Activated T-helper 1 cell treated with anti-CD3 and anti-CD28 coated beads, Interleukin-12 subunit alpha, Interleukin-12 subunit beta, Interleukin-2, Interleukin-4 antibody, amounts not matched to agents 30 ng/mL and 10 ng/mL and 1 ng/mL, durations not matched to agents 14 hours and 24 hours and 36 hours (primary cell): ENCODE measurements at regions of chr3 and their contacts with region 1.

Region 1: DNA sequence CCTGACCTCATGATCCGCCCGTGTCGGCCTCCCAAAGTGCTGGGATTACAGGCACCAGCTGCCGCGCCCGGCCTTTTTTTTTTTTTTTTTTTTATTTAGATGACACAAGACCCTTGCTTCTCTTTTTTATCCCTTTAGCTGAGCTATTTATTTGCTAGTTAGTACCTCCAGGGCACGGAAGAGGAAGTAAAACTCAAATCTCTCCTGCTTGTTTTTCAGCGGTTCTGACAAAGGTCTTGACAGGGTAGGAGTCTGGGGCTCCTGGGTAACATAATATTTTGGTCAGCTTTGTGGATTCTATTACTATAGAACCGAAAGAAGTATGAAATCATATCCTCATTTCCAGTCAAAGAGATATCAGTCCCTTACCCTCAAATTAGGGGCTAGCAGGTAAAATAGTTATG is 44.0 kb upstream of the ETV5 start:
- DNase-seq: no peak
- H3K4me3 Mint-ChIP-seq: no peak overlapping the region
- H3K27ac Mint-ChIP-seq: no peak overlapping the region
- H3K4me1 Mint-ChIP-seq: peaks cover 17% of the 10 kb centered on the region
- H3K27me3 Mint-ChIP-seq: peaks cover 31% of the 10 kb centered on the region

Region 2: DNA sequence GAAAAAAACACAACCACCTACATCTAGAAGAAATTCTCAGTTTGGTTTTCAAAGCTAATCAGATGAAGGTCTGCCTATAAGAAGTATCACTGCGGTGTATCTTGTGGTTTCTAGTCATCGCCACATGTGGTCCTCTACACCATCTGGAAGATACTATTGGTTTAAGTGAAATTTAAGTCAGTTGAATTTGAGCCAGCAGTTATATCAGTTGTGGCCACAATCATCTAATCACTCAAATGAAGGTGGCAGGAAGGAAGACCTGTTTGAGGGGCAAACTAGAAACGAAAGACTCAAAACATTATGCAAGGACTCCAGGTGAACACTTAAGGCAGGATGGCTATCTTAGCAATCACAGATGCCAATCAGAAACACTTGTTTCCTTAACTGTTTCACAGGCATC is 92.7 kb before region 1 on chr3:
- intact Hi-C with region 1: loop called (anchors 1 kb)
- DNase-seq: peak; percentile 3
- H3K4me3 Mint-ChIP-seq: no peak overlapping the region
- H3K27ac Mint-ChIP-seq: no peak overlapping the region
- H3K4me1 Mint-ChIP-seq: peaks cover 13% of the 10 kb centered on the region
- H3K27me3 Mint-ChIP-seq: peaks cover 57% of the 10 kb centered on the region

Region 3: GRCh38 chr3:186180891-186181481 is 28.1 kb after region 1 on chr3:
- intact Hi-C with region 1: loop called (anchors 2 kb)
- DNase-seq: peak; percentile 4
- H3K4me3 Mint-ChIP-seq: no peak overlapping the region
- H3K27ac Mint-ChIP-seq: no peak overlapping the region
- H3K4me1 Mint-ChIP-seq: peaks cover 41% of the 10 kb centered on the region
- H3K27me3 Mint-ChIP-seq: peaks cover 13% of the 10 kb centered on the region

Region 4: GRCh38 chr3:186217820-186218164 is 64.9 kb after region 1 on chr3:
- intact Hi-C with region 1: loop called (anchors 2 kb)
- DNase-seq: no peak
- H3K4me3 Mint-ChIP-seq: no peak overlapping the region
- H3K27ac Mint-ChIP-seq: no peak overlapping the region
- H3K4me1 Mint-ChIP-seq: peaks cover 15% of the 10 kb centered on the region
- H3K27me3 Mint-ChIP-seq: peaks cover 27% of the 10 kb centered on the region